ENCODE measurements at regions of chr1 and their contacts with region 1.

Region 1: GRCh38 chr1:15409388-15410222 is at the start of gene EFHD2:
- DNase-seq: peak; percentile 86
- H3K4me3 Mint-ChIP-seq: peak within 1 kb of the TSS; percentile 92
- H3K27ac Mint-ChIP-seq: peak within 1 kb of the TSS; percentile 81
- H3K4me1 Mint-ChIP-seq: peaks cover 34% of the 10 kb centered on the region
- H3K27me3 Mint-ChIP-seq: no peaks in the 10 kb centered on the region
- total RNA-seq, gene EFHD2: 60.4 to 61.3 TPM

Region 2: DNA sequence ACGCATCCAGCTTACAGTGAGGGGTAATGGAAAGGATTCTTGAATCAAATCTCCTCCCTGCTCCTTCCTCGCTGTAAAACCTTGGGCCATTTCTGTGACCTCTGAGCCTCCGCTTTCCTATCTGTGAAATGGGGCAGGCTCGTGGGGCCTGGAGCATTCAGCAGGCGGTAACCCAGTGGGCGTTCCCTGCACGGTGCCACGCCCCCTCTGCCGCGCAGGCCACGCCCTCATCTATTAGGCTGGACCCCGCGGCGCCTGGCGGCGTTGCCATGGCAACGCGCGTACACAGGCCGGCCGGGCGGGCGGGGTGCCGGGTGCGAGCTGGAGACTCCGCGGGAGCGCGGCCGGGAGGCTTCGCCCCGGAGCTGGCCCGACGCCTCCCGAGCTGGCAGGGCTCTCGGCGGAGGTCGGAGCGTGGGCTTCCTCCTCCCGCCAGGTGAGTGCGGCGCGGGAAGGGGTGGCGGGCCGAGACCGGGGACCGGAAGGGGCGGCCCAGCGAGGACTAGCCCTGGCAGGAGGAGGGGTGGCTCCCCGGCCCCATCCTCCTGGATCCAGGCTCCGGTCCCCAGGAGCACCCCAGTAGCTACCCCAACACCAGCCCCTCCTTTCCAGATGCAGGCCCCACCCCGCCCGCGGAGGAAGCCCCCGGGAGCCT is 162.5 kb before region 1 on chr1 and contains the start of gene FHAD1:
- CTCF ChIA-PET with region 1: no interaction called
- POLR2A ChIA-PET with region 1: no interaction called
- intact Hi-C with region 1: loop called (anchors 5 kb)
- DNase-seq: peak; percentile 61
- H3K4me3 Mint-ChIP-seq: peak within 1 kb of the TSS; percentile 39
- H3K27ac Mint-ChIP-seq: no peak within 1 kb of the TSS
- H3K4me1 Mint-ChIP-seq: peaks cover 54% of the 10 kb centered on the region
- H3K27me3 Mint-ChIP-seq: peaks cover 50% of the 10 kb centered on the region
- total RNA-seq, gene FHAD1: not detected

Region 3: GRCh38 chr1:15352123-15352957 is 57.3 kb before region 1 on chr1:
- CTCF ChIA-PET with region 1: no interaction called
- POLR2A ChIA-PET with region 1: no interaction called
- intact Hi-C with region 1: loop called (anchors 2 kb)
- DNase-seq: peak; percentile 64
- H3K4me3 Mint-ChIP-seq: peak overlapping the region; percentile 9
- H3K27ac Mint-ChIP-seq: peak overlapping the region; percentile 35
- H3K4me1 Mint-ChIP-seq: peaks cover 32% of the 10 kb centered on the region
- H3K27me3 Mint-ChIP-seq: peaks cover 6% of the 10 kb centered on the region

Region 4: GRCh38 chr1:15430787-15431570 is 21.4 kb after region 1 on chr1:
- CTCF ChIA-PET with region 1: interaction called, 14 read pairs
- POLR2A ChIA-PET with region 1: interaction called, 4 read pairs
- intact Hi-C with region 1: no loop called
- DNase-seq: peak; percentile 81
- H3K4me3 Mint-ChIP-seq: no peak overlapping the region
- H3K27ac Mint-ChIP-seq: no peak overlapping the region
- H3K4me1 Mint-ChIP-seq: peaks cover 4% of the 10 kb centered on the region
- H3K27me3 Mint-ChIP-seq: no peaks in the 10 kb centered on the region